B cell (primary cell): ENCODE measurements at regions of chr13 and their contacts with region 1.

Region 1: DNA sequence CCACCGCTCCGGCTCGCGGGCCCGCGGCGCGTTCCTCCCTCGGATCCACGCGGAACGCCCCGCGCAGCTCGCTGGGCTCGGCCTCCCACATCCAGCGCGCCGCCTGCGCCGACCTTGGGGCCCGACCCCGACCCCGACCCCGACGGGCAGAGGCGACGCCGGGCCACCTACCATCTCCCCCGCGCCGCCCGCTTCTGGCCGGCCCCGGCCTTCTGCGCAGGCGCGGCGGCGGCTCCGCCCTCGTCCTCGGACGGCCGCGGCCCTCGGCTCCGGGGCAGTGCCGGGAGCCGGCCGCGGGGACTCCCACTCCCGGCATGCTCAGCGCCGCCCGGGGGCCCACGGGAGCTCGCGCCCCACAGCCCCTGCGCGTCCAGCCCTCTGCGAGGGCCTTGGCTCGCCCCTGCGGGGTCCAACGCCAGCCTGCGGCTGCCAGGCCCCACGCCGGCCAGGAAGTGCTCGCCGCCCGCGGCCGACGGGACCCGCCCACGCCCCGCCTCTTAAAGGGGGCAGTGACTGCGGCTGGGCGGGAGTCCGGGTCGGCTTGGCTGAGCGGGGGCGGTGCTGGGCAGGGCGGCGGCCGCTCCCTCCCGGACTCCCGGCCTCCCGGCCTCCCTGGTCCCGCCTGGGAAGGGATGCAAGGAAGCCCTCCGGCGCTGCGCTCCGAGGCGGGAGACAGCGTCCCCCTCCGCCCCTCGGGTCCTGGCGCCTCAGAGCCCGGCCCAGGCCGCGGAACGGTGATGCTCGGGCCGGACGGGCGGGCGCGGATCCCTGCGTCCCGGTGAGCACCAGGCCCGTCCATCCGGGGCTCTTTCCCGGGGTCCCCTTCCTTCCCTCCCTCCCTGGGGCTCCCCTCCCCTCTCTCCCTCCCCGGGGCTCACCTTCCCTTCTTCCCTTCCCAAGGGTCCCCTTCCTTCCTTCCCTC is at the start of gene DCUN1D2:
- DNase-seq: peak; percentile 90
- ATAC-seq: peak; percentile 92
- H3K4me3 ChIP-seq: peak within 1 kb of the TSS; percentile 53 to 82 (median 68)
- H3K4me3 Mint-ChIP-seq: peak within 1 kb of the TSS; percentile 94
- H3K27ac ChIP-seq: peak within 1 kb of the TSS in 1 of 2 donors; percentile 73
- H3K27ac Mint-ChIP-seq: peak within 1 kb of the TSS; percentile 88
- H3K4me1 ChIP-seq: peaks cover 24 to 27% of the 10 kb centered on the region in 2 donors
- H3K4me1 Mint-ChIP-seq: peaks cover 53% of the 10 kb centered on the region
- H3K27me3 ChIP-seq: no peaks in the 10 kb centered on the region
- H3K27me3 Mint-ChIP-seq: no peaks in the 10 kb centered on the region
- CTCF ChIP-seq: no peak
- total RNA-seq, gene DCUN1D2: 38.2 and 41.3 TPM in 2 replicates

Region 2: GRCh38 chr13:112689303-112690165 is 801.2 kb before region 1 on chr13 and contains the start of gene ATP11A:
- CTCF ChIA-PET with region 1: no interaction called
- POLR2A ChIA-PET with region 1: no interaction called
- intact Hi-C with region 1: no loop called
- DNase-seq: peak; percentile 77
- ATAC-seq: peak; percentile 82
- H3K4me3 ChIP-seq: peak within 1 kb of the TSS; percentile 62 to 85 (median 73)
- H3K4me3 Mint-ChIP-seq: peak within 1 kb of the TSS; percentile 88
- H3K27ac ChIP-seq: peak within 1 kb of the TSS; percentile 36 to 58
- H3K27ac Mint-ChIP-seq: peak within 1 kb of the TSS; percentile 85
- H3K4me1 ChIP-seq: peaks cover 16 to 29% of the 10 kb centered on the region in 2 donors
- H3K4me1 Mint-ChIP-seq: peaks cover 47% of the 10 kb centered on the region
- H3K27me3 ChIP-seq: peaks cover 0 to 7% (median 0%) of the 10 kb centered on the region in 4 experiments
- H3K27me3 Mint-ChIP-seq: peaks cover 6% of the 10 kb centered on the region
- CTCF ChIP-seq: no peak
- total RNA-seq, gene ATP11A: 60.3 and 75.3 TPM in 2 replicates

Region 3: GRCh38 chr13:113153810-113154748 is 336.7 kb before region 1 on chr13:
- CTCF ChIA-PET with region 1: no interaction called
- POLR2A ChIA-PET with region 1: no interaction called
- intact Hi-C with region 1: loop called (anchors 2 kb)
- DNase-seq: peak; percentile 80
- ATAC-seq: peak; percentile 88
- H3K4me3 ChIP-seq: peak overlapping the region; percentile 40 to 77 (median 52)
- H3K4me3 Mint-ChIP-seq: peak overlapping the region; percentile 81
- H3K27ac ChIP-seq: peak overlapping the region; percentile 6 to 48
- H3K27ac Mint-ChIP-seq: peak overlapping the region; percentile 71
- H3K4me1 ChIP-seq: peaks cover 22 to 25% of the 10 kb centered on the region in 2 donors
- H3K4me1 Mint-ChIP-seq: peaks cover 19% of the 10 kb centered on the region
- H3K27me3 ChIP-seq: peaks cover 0 to 46% (median 11%) of the 10 kb centered on the region in 4 experiments
- H3K27me3 Mint-ChIP-seq: peaks cover 9% of the 10 kb centered on the region
- CTCF ChIP-seq: no peak

Region 4: DNA sequence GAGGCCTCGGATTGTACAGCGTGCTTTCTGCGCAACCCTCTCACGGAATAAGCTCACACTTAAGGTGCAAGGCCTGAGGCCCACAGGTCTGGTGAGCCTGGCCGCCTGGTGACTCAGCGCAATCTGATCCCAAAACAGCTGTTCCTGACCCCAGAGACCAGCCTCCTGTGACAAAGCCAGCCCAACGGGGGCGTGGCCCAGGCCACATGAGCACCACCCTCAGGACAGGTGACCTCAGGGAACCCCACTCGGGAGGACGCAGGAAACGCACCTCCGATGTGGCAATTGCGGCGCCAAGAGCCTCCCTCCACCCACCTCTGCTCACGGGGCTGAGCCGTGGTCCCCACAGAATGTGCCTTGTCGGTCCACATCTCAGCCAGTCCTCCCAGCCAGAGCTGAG is 153.2 kb before region 1 on chr13:
- CTCF ChIA-PET with region 1: no interaction called
- POLR2A ChIA-PET with region 1: no interaction called
- intact Hi-C with region 1: no loop called
- DNase-seq: no peak
- ATAC-seq: no peak
- H3K4me3 ChIP-seq: no peak overlapping the region
- H3K4me3 Mint-ChIP-seq: no peak overlapping the region
- H3K27ac ChIP-seq: no peak overlapping the region
- H3K27ac Mint-ChIP-seq: no peak overlapping the region
- H3K4me1 ChIP-seq: no peaks in the 10 kb centered on the region
- H3K4me1 Mint-ChIP-seq: no peaks in the 10 kb centered on the region
- H3K27me3 ChIP-seq: no peaks in the 10 kb centered on the region
- H3K27me3 Mint-ChIP-seq: peaks cover 9% of the 10 kb centered on the region
- CTCF ChIP-seq: no peak